B cell (primary cell): ENCODE measurements at regions of chr14 and their contacts with region 1.

Region 1: GRCh38 chr14:55088356-55088755 is 36.9 kb downstream of the MAPK1IP1L start:
- DNase-seq: no peak
- ATAC-seq: no peak
- H3K4me3 ChIP-seq: no peak overlapping the region
- H3K4me3 Mint-ChIP-seq: no peak overlapping the region
- H3K27ac ChIP-seq: no peak overlapping the region
- H3K27ac Mint-ChIP-seq: no peak overlapping the region
- H3K4me1 ChIP-seq: no peaks in the 10 kb centered on the region
- H3K4me1 Mint-ChIP-seq: peaks cover 5% of the 10 kb centered on the region
- H3K27me3 ChIP-seq: no peaks in the 10 kb centered on the region
- H3K27me3 Mint-ChIP-seq: no peaks in the 10 kb centered on the region
- CTCF ChIP-seq: no peak

Region 2: GRCh38 chr14:55071870-55072640 is 16.3 kb before region 1 on chr14:
- CTCF ChIA-PET with region 1: interaction called, 19 read pairs
- POLR2A ChIA-PET with region 1: no interaction called
- intact Hi-C with region 1: loop called (anchors 2 kb)
- DNase-seq: peak; percentile 86
- ATAC-seq: peak; percentile 75
- H3K4me3 ChIP-seq: peak overlapping the region in 4 of 5 experiments; percentile 4 to 48 (median 31)
- H3K4me3 Mint-ChIP-seq: peak overlapping the region; percentile 81
- H3K27ac ChIP-seq: peak overlapping the region; percentile 84 to 93
- H3K27ac Mint-ChIP-seq: peak overlapping the region; percentile 96
- H3K4me1 ChIP-seq: peaks cover 34 to 52% of the 10 kb centered on the region in 2 donors
- H3K4me1 Mint-ChIP-seq: peaks cover 66% of the 10 kb centered on the region
- H3K27me3 ChIP-seq: no peaks in the 10 kb centered on the region
- H3K27me3 Mint-ChIP-seq: no peaks in the 10 kb centered on the region
- CTCF ChIP-seq: no peak

Region 3: DNA sequence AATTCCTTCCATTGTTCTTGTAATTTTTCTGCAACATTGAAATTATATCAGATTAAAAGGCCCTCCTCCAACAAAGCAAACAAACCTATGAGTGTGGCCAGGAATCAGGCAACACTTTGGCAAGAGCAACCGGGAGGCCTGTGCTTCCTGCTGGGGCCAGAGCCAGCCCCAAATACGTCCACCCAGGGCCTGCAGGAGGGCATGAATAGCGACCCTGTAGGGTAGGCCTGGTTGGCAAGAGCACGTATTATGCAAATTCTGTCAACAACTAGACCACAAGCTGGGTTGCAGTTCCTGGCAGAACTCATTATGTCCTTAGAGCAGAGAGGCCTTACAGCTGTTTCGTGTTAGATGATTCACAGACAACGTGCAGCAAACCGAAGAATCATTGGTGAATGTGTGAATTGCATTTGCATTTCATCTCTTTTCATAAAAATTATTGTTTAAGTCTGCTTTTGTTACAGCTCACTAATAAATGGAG is 13.8 kb after region 1 on chr14:
- CTCF ChIA-PET with region 1: interaction called, 9 read pairs
- POLR2A ChIA-PET with region 1: interaction called, 4 read pairs
- intact Hi-C with region 1: loop called (anchors 2 kb)
- DNase-seq: peak; percentile 73
- ATAC-seq: peak; percentile 89
- H3K4me3 ChIP-seq: no peak overlapping the region
- H3K4me3 Mint-ChIP-seq: peak overlapping the region; percentile 70
- H3K27ac ChIP-seq: no peak overlapping the region
- H3K27ac Mint-ChIP-seq: peak overlapping the region; percentile 84
- H3K4me1 ChIP-seq: peaks cover 34 to 47% of the 10 kb centered on the region in 2 donors
- H3K4me1 Mint-ChIP-seq: peaks cover 44% of the 10 kb centered on the region
- H3K27me3 ChIP-seq: no peaks in the 10 kb centered on the region
- H3K27me3 Mint-ChIP-seq: no peaks in the 10 kb centered on the region
- CTCF ChIP-seq: no peak

Region 4: GRCh38 chr14:55107766-55108554 is 19.6 kb after region 1 on chr14:
- CTCF ChIA-PET with region 1: interaction called, 9 read pairs
- POLR2A ChIA-PET with region 1: interaction called, 15 read pairs
- intact Hi-C with region 1: loop called (anchors 2 kb)
- DNase-seq: no peak
- ATAC-seq: peak; percentile 49
- H3K4me3 ChIP-seq: no peak overlapping the region
- H3K4me3 Mint-ChIP-seq: no peak overlapping the region
- H3K27ac ChIP-seq: no peak overlapping the region
- H3K27ac Mint-ChIP-seq: no peak overlapping the region
- H3K4me1 ChIP-seq: peaks cover 10 to 14% of the 10 kb centered on the region in 2 donors
- H3K4me1 Mint-ChIP-seq: peaks cover 17% of the 10 kb centered on the region
- H3K27me3 ChIP-seq: no peaks in the 10 kb centered on the region
- H3K27me3 Mint-ChIP-seq: no peaks in the 10 kb centered on the region
- CTCF ChIP-seq: no peak

Region 5: DNA sequence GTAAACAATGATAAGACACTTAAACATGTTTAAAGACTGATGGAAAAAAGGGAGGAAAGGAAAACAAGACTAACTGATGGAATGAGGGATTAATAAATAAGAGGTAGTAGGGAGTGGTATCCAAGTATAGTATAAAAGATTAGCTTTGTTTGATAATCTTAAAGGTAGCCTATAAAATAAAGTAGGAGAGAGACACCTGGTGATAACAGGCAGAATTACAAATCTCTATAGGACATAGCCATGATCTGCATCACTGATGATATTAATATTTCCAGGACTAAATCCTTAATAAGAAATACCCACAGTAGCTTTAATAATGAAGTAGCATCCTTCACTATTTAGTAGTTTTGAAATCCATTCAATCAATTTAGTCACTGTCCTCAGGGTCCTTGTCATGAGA is 72.6 kb after region 1 on chr14:
- CTCF ChIA-PET with region 1: interaction called, 98 read pairs
- POLR2A ChIA-PET with region 1: interaction called, 3 read pairs
- intact Hi-C with region 1: loop called (anchors 1 kb)
- DNase-seq: peak; percentile 60
- ATAC-seq: peak; percentile 85
- H3K4me3 ChIP-seq: no peak overlapping the region
- H3K4me3 Mint-ChIP-seq: no peak overlapping the region
- H3K27ac ChIP-seq: no peak overlapping the region
- H3K27ac Mint-ChIP-seq: no peak overlapping the region
- H3K4me1 ChIP-seq: no peaks in the 10 kb centered on the region
- H3K4me1 Mint-ChIP-seq: peaks cover 2% of the 10 kb centered on the region
- H3K27me3 ChIP-seq: no peaks in the 10 kb centered on the region
- H3K27me3 Mint-ChIP-seq: no peaks in the 10 kb centered on the region
- CTCF ChIP-seq: peak; percentile 74

Region 6: DNA sequence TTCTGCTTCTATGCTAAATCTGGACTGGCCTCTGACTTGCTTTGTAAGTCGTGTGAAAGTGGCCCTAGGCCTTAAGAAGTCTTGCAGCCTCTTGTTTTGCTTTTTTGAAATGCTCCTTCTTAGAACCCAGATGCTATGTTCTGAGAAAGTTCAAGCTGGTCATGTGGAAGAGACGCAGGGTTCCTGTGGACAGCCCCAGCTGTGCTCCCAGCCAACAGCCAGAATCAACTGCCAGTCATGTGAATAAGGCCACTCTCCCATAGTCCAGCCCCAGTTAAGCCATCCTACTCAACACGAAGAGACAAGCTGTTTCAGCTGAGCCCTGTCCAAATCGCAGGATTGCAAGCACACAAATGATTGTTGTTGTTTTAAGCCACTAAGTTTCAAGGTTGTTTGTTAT is 389.3 kb after region 1 on chr14:
- CTCF ChIA-PET with region 1: no interaction called
- POLR2A ChIA-PET with region 1: no interaction called
- intact Hi-C with region 1: no loop called
- DNase-seq: no peak
- ATAC-seq: no peak
- H3K4me3 ChIP-seq: no peak overlapping the region
- H3K4me3 Mint-ChIP-seq: no peak overlapping the region
- H3K27ac ChIP-seq: no peak overlapping the region
- H3K27ac Mint-ChIP-seq: no peak overlapping the region
- H3K4me1 ChIP-seq: no peaks in the 10 kb centered on the region
- H3K4me1 Mint-ChIP-seq: no peaks in the 10 kb centered on the region
- H3K27me3 ChIP-seq: no peaks in the 10 kb centered on the region
- H3K27me3 Mint-ChIP-seq: no peaks in the 10 kb centered on the region
- CTCF ChIP-seq: no peak